ENCODE measurements at regions of chr19 and their contacts with region 1.

Region 1: DNA sequence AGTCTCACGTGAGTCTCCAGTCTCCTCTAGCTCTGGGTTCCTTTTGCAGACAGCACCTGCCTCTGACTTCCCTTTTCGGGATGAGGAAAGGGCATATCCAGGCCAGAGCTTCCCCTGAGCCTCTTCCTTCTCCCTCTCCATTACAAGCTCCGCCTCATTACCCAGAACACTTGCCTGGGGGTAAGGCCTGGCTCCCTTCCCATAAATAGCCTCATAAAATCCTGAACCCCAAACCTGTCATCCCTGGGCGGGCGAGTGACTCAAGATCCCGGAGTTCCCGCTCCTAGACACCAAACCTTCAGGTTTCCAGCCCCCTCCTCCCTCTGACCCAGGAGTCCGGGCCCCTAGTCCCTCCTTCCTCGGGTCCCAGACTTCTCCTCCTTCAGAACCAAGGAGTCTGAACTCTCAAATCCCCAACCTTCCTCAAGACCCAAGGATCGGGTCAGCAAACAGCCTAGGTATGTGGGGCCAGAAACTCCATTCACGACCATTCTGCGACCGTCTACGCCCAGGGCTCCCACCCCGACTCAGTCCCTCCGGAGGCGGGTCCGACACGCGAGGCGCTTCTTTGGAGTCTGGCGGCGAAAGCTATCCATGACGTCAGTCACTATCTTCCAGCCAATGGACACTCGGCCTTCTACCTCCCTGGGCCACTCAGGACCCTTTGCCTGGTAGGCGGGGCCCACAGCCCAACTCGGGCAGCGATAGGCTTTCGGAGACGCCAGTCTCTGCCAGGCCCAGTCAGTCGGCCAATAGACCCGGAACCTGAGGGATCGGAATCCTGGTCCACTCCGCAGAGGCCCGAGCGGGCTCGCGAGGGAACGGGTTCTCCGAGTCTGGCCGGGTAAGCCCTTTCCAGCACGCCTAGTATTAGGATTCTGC is 6.5 kb upstream of the CNFN start:
- DNase-seq: peak; percentile 98
- ATAC-seq: peak; percentile 99
- H3K4me3 ChIP-seq: peak overlapping the region; percentile 97
- H3K27ac ChIP-seq: peak overlapping the region; percentile 80
- H3K4me1 ChIP-seq: peaks cover 8% of the 10 kb centered on the region
- H3K27me3 ChIP-seq: no peaks in the 10 kb centered on the region
- CTCF ChIP-seq: no peak
- EP300 ChIP-seq: no peak
- POLR2A ChIP-seq: peak; percentile 89
- RAD21 ChIP-seq: no peak

Region 2: DNA sequence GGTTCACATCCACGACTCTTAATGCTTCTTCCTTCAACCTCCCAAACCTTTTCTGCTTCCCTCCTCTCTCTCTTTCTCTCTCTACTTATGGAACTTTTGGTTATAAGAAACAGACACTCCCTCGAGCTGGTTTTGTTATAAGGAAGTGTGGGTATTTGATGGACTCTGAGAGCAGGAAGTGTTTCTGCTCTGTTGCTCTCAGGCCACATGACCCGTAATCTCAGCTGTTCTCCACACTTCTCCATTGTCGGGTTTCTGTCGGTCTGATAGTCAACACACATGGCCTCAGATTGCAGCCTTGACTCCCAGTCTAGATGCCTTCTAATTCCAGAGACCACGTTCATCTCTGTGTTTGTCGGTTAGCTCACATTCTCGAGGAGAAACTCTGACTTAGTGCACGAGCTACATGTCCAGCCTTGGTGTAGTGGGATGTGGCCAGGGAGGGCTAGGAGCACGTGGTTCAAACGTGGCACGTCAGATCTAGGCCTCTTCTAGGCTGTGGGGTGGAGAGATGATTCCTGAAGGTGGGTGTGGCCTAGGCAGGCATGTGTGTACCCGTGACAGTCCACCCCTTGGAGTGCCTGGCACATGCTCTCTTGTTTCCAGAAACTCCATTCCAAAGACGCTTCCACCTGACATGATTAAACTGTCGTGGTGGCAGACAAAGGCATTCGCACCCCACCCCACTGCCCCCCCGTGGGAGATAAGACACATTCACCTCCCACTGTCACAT is 32.8 kb before region 1 on chr19:
- CTCF ChIA-PET with region 1: interaction called, 10 read pairs
- POLR2A ChIA-PET with region 1: interaction called, 4 read pairs
- RAD21 ChIA-PET with region 1: interaction called, 3 read pairs
- SMC1A ChIA-PET with region 1: interaction called, 5 read pairs
- in situ Hi-C with region 1: no loop called
- intact Hi-C with region 1: no loop called
- DNase-seq: peak; percentile 30
- ATAC-seq: peak; percentile 50
- H3K4me3 ChIP-seq: no peak overlapping the region
- H3K27ac ChIP-seq: no peak overlapping the region
- H3K4me1 ChIP-seq: peaks cover 4% of the 10 kb centered on the region
- H3K27me3 ChIP-seq: no peaks in the 10 kb centered on the region
- CTCF ChIP-seq: no peak
- EP300 ChIP-seq: no peak
- POLR2A ChIP-seq: no peak
- RAD21 ChIP-seq: no peak

Region 3: DNA sequence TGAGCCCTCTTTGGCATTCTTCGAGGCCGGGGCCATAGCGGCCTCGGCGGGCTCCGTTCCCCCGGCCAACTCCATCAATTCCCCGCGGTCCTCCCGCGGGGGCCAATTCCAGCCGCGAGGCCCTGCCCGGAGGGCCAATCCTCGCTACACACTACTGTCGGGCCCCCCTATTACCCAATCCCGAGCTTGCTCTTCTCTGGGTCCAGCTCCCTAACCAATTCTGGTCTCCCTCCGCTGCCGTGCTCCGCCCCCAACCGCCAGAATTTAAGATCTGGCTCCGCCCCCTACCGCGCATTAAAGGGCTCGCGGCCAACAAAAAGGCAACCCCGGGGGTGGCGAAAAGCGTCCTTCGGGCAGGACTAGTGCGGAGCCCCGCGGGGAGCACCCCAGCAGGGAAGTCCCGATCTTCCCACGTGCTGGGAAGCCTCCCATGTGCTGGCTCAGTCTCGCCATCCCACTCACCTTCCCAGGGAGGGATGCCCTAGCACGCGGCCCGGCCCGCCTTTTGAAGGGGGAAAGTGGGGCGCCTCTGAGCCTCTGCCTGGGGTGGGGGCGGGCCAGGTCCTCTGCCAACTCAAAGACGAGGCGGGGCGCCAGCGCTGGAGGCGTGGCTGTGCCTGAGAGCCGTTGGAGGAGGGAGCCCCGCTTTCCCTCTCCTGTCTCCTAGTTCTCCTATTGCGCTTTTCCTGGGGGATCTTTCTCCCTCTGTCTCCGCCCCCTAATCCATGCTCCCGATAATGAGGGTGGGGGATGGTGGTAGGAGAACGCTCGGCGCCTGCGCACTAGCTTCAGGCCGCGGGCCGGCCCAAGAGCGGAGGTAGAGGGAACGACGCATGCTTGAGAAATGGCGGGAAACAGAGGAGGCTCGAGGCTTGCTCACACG is 27.1 kb after region 1 on chr19:
- CTCF ChIA-PET with region 1: interaction called, 22 read pairs
- POLR2A ChIA-PET with region 1: interaction called, 8 read pairs
- RAD21 ChIA-PET with region 1: interaction called, 4 read pairs
- SMC1A ChIA-PET with region 1: interaction called, 8 read pairs
- in situ Hi-C with region 1: no loop called
- intact Hi-C with region 1: no loop called
- DNase-seq: no peak
- ATAC-seq: peak; percentile 96
- H3K4me3 ChIP-seq: peak overlapping the region; percentile 94
- H3K27ac ChIP-seq: peak overlapping the region; percentile 86
- H3K4me1 ChIP-seq: peaks cover 16% of the 10 kb centered on the region
- H3K27me3 ChIP-seq: no peaks in the 10 kb centered on the region
- CTCF ChIP-seq: no peak
- EP300 ChIP-seq: no peak
- POLR2A ChIP-seq: peak; percentile 69
- RAD21 ChIP-seq: no peak

Region 4: DNA sequence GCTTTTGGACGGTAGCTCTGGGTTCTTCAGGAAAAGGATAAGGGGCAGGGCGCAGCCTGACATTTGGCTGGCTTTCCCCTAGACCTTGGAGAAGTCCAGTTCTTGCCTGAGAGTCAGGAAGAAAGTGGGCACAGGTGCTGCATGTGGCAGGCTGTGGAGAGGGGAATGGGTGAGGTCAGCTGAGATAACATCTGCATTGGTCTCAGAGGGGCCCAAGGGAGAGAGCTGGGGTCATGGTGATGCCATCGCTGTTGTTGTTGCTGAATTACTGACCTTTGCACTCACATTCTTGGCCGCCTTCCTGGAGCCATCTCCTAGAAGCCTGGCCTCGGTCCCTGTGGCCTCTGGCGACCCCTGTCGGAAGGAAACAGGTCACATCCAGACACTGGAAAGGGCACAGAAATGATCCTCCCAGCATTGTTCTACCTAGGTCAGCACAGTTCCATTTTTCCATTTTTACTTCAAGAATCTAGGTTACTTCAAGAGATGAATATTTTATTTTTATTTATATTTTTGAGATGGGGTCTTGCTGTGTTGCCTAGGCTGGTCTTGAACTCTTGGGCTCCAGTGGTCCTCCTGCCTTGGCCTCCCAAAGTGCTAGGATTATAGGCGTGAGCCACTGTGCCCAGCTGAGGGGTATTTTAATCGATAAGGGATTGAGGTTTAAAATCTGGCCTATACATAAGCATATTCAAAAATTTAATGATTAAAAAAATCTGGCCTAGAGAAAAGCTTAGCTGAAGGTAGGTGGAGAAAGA is 37.1 kb after region 1 on chr19:
- CTCF ChIA-PET with region 1: interaction called, 10 read pairs
- POLR2A ChIA-PET with region 1: no interaction called
- RAD21 ChIA-PET with region 1: no interaction called
- SMC1A ChIA-PET with region 1: interaction called, 4 read pairs
- in situ Hi-C with region 1: no loop called
- intact Hi-C with region 1: no loop called
- DNase-seq: no peak
- ATAC-seq: peak; percentile 97
- H3K4me3 ChIP-seq: no peak overlapping the region
- H3K27ac ChIP-seq: no peak overlapping the region
- H3K4me1 ChIP-seq: no peaks in the 10 kb centered on the region
- H3K27me3 ChIP-seq: no peaks in the 10 kb centered on the region
- CTCF ChIP-seq: peak; percentile 91 to 95 (median 93)
- EP300 ChIP-seq: no peak
- POLR2A ChIP-seq: no peak
- RAD21 ChIP-seq: peak; percentile 83

Region 5: DNA sequence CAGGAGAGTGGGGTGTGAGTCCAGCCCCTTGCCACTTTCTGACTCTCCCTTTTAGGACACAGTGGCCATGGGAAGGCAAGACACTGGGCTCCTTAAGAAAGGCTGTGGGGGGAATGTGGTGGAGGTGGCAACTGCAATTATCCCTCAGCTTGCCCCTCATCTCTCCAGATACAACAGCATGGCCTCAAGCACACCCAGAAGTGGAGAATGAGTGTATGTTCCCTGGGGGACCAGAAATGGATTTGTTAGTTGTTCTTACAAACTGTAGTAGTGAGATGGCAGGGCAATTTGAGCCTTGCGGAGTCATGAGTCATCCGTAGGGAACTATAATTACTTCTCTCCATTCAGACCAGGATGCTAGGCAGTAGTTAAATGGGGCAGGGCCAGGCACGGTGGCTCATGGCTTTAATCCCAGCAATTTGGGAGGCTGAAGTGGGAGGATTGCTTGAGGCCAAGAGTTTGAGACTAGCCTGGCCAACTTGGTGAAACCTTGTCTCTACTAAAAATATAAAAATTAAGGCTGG is 71.7 kb after region 1 on chr19:
- CTCF ChIA-PET with region 1: no interaction called
- POLR2A ChIA-PET with region 1: no interaction called
- RAD21 ChIA-PET with region 1: no interaction called
- SMC1A ChIA-PET with region 1: no interaction called
- in situ Hi-C with region 1: no loop called
- intact Hi-C with region 1: no loop called
- DNase-seq: no peak
- ATAC-seq: no peak
- H3K4me3 ChIP-seq: no peak overlapping the region
- H3K27ac ChIP-seq: no peak overlapping the region
- H3K4me1 ChIP-seq: peaks cover 30% of the 10 kb centered on the region
- H3K27me3 ChIP-seq: no peaks in the 10 kb centered on the region
- CTCF ChIP-seq: no peak
- EP300 ChIP-seq: no peak
- POLR2A ChIP-seq: no peak
- RAD21 ChIP-seq: no peak